Pancreas (tissue), 10 donors: ENCODE measurements at regions of chr7 and their contacts with region 1.

Region 1: DNA sequence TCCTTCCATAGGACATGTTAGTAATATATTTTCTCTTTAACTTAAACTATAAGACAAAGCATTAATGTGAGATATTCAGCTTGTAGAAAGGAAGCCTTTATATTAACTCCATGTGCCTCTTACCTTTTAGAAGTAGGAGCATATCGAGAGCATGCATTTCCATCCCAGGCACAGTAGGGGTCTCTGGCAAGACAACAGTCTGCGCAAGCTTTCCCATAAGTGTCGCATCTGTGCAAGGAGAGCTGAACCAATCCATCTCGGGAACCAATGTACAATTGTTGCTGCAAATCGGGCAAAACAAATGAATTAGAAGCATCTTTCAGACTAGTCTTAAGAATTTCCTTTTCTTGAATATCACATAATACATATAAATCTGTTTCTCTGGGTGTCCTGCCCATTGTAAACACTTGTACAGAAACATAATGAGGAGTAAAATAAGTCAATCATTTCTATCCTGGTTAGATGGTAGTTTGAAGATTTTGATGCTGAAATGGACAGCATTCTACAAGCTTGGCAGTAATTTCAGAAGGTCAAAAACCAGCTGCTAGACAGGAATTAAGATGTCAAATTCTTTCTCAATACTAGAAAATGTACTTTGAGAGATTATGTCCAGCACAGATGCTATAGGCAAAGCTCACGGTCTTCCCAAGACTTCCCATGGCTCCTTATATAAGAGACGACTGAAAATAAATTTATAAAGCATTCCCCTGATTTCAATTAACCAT is 171.8 kb downstream of the SEMA3D start:
- DNase-seq: no peak
- ATAC-seq: no peak
- H3K4me3 ChIP-seq: no peak overlapping the region
- H3K27ac ChIP-seq: no peak overlapping the region
- H3K4me1 ChIP-seq: no peaks in the 10 kb centered on the region
- H3K27me3 ChIP-seq: peaks cover 0 to 4% (median 1%) of the 10 kb centered on the region in 4 donors
- CTCF ChIP-seq: no peak

Region 2: DNA sequence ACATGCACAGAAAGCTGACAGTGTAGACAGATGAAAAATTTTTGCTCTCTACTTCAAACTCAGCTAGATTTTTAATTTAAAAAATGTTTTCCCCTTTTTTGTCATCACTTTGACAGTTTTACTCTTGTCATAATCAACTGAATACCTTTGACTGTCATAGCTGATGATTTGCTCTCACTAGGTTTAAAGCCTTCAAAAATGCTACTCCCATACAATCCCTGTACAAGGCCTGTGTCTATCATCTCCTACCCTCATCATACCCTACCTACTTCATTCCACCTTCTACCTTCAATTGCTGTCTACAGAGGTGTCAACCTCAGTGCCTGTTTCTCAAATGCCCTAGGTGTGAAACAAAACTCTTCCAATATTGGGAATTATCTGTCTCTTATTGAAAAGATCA is 1050.8 kb before region 1 on chr7:
- intact Hi-C with region 1: loop called in 1 of 3 experiments (anchors 10 kb)
- DNase-seq: no peak
- ATAC-seq: no peak
- H3K4me3 ChIP-seq: no peak overlapping the region
- H3K27ac ChIP-seq: no peak overlapping the region
- H3K4me1 ChIP-seq: no peaks in the 10 kb centered on the region
- H3K27me3 ChIP-seq: no peaks in the 10 kb centered on the region
- CTCF ChIP-seq: no peak

Region 3: DNA sequence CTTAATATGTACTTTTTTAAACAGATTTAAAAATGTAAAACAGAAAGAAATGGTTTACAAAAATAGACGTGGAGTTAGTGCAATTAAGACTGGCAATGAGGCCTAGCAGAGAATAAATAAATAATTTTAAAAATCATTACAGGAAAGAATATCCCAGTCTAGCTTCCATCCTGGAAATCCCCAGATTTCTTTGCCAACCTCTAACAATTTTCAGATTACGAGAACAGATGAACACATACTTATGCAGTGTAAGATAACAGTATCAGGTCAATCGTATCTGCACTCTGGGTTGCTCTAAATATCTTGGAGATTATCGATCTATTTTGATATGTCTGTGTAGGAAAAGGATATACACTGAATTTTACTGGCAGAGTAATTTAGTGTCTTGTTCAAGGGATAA is 1031.0 kb before region 1 on chr7:
- intact Hi-C with region 1: loop called in 2 of 3 experiments (anchors 5 kb)
- DNase-seq: no peak
- ATAC-seq: no peak
- H3K4me3 ChIP-seq: no peak overlapping the region
- H3K27ac ChIP-seq: no peak overlapping the region
- H3K4me1 ChIP-seq: no peaks in the 10 kb centered on the region
- H3K27me3 ChIP-seq: no peaks in the 10 kb centered on the region
- CTCF ChIP-seq: no peak

Region 4: DNA sequence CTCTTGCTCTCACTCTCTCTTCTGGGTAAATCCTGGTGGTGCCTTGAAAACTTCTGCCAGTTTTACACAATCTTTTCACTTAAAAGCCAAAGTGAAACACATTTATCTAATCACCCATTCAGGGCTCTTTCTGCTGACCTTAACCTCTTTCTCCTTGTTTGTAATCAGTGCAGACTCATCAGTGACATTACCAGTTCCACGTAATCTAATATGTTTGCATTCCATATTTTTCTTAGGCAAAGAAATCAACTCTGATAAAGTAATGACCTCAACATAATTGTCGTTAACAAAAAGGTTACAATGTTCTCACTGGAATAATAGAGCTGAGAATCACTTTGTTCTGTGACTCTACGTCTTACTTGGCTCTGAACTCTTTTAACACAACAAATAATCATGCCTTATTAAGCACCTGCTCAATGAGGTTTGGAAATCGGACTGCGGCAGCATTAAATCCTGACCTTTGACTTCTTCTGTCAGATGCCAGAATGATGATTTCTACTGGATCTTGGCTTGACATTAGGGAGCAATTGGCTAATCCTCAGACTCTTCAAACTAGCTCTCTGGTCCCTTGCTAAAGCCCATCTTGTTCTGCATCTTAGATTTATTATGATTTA is 62.0 kb before region 1 on chr7:
- intact Hi-C with region 1: no loop called
- DNase-seq: no peak
- ATAC-seq: no peak
- H3K4me3 ChIP-seq: no peak overlapping the region
- H3K27ac ChIP-seq: no peak overlapping the region
- H3K4me1 ChIP-seq: no peaks in the 10 kb centered on the region
- H3K27me3 ChIP-seq: no peaks in the 10 kb centered on the region
- CTCF ChIP-seq: no peak